ENCODE measurements at regions of chr7 and their contacts with region 1.

Region 1: DNA sequence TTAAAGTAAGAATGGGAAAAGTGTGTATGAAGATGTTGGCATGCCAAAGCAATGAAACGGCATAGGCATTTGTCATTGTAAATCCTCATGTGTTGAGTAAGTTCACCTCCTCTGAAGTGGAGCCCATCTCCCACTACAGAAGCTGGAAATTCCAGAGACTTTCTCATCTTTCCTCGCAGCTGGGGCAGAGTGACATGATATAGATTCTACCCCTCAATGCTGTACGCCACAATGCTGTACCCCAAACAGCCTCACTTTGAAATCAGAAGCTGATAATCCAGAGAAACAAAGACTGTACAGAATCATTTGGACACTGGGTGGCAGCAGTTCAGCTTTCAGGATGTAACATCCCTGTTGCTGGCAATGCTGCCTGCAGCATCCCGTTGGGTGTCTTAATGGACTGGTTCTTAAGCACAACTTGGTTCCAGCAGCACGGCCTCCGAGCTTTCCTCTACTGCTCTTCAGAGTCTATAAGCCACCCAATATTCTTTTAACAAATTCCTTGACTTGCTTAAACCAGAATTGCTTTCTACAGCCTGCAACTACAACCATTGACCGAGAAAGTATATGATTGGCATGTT is 18.8 kb downstream of the ZC3HAV1L start:
- DNase-seq: peak; percentile 56 to 71 (median 63)
- H3K4me3 ChIP-seq: no peak overlapping the region
- H3K4me3 Mint-ChIP-seq: no peak overlapping the region
- H3K27ac ChIP-seq: no peak overlapping the region
- H3K27ac Mint-ChIP-seq: no peak overlapping the region
- H3K4me1 ChIP-seq: no peaks in the 10 kb centered on the region
- H3K4me1 Mint-ChIP-seq: peaks cover 0 to 12% (median 5%) of the 10 kb centered on the region in 4 donors
- H3K27me3 ChIP-seq: no peaks in the 10 kb centered on the region
- H3K27me3 Mint-ChIP-seq: peaks cover 0 to 5% of the 10 kb centered on the region in 2 donors

Region 2: DNA sequence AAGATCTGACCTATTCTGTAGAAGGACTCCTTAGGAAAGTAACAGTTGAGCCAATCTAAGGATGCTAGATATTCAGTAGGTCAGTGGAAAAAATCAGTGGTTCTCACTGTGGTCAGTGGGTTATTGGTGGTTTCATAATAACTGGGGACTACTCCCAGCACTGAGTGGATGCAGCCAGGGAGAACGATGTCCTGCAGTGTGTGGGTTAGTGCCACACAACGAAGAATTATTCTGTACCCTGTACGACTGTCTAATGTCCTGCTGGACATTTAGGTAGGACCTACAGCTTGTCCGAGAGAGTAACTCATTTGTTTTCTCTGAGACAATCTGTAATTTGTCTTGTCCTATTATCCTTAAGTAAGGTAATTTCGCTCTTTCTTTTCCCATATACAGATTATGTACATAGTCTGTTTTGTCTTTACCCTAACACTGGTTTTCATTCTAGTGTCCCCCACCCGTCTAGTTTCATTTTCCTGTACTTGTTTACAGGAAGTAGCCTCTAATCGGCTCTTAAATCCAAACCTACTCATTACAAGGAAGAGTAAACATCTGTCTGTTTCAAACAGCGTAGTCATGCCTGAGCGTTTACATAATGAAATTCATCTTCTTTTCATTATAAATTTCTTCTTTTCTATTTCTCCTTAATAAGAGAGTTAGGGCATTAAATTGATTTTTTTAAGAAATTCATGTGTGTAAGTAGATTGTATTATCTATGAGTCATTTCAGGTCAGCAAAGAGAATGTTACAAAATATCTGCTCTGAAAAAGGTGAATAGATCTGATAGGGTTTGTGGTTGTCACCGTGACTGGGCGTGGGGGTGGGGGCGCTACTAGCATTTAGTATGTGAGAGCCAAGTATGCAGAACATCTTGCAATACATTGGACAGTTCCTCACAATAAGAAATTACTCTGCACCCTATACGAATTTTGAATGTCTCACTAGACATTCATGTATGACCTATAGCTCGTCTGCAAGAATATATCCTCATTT is 27.1 kb after region 1 on chr7:
- CTCF ChIA-PET with region 1: interaction called, 10 read pairs
- POLR2A ChIA-PET with region 1: interaction called, 4 read pairs
- intact Hi-C with region 1: loop called (anchors 1 kb)
- DNase-seq: peak; percentile 60 to 92 (median 68)
- H3K4me3 ChIP-seq: no peak overlapping the region
- H3K4me3 Mint-ChIP-seq: peak overlapping the region in 6 of 8 donors; percentile 51 to 77 (median 65)
- H3K27ac ChIP-seq: peak overlapping the region; percentile 15
- H3K27ac Mint-ChIP-seq: peak overlapping the region; percentile 57 to 93 (median 86)
- H3K4me1 ChIP-seq: peaks cover 61% of the 10 kb centered on the region
- H3K4me1 Mint-ChIP-seq: peaks cover 47 to 81% (median 61%) of the 10 kb centered on the region in 4 donors
- H3K27me3 ChIP-seq: no peaks in the 10 kb centered on the region
- H3K27me3 Mint-ChIP-seq: no peaks in the 10 kb centered on the region

Region 3: DNA sequence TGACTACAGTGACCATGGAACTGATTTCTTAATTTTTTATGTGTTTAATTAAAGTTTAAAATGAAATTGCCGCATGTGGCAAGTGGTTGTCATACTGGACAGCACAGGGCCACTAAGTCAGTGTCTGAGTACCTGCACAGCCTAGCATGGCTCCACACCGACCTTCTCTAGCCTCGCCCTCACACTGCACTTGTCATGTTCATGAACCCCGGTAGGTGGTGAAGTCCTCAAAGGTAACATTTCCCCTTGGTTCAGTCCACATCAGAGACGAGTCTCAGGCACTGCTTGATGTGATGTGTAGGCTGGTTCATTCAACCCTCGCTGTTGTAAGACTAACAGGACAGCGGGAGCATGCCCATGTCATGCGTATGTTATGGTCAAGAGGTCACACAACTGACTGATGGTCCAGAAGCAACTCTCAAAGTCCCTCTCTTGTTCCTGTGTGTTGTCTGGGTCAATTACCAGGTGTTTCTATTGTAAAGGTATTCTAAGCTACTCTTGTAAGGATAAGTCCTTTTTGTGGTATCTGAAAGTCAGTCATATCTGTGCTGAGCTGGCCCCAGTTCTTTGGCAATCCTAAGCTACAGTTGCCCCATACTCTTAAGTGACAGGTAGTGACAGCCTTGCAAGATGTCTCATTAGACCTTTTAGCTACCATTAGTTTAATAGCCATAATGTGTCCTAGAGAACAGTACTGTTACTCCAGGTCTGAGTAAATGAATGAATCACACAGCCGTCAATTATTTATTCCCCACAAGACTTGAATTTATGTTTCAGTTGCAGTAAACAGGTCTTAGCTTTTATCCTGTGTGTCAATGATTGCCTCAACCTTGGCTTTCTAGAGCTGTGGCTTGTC is 51.8 kb after region 1 on chr7:
- CTCF ChIA-PET with region 1: interaction called, 140 read pairs
- POLR2A ChIA-PET with region 1: interaction called, 11 read pairs
- intact Hi-C with region 1: no loop called
- DNase-seq: no peak
- H3K4me3 ChIP-seq: no peak overlapping the region
- H3K4me3 Mint-ChIP-seq: peak overlapping the region in 1 of 8 donors; percentile 40
- H3K27ac ChIP-seq: no peak overlapping the region
- H3K27ac Mint-ChIP-seq: peak overlapping the region; percentile 47 to 93 (median 68)
- H3K4me1 ChIP-seq: peaks cover 43% of the 10 kb centered on the region
- H3K4me1 Mint-ChIP-seq: peaks cover 33 to 83% (median 56%) of the 10 kb centered on the region in 4 donors
- H3K27me3 ChIP-seq: no peaks in the 10 kb centered on the region
- H3K27me3 Mint-ChIP-seq: no peaks in the 10 kb centered on the region

Region 4: DNA sequence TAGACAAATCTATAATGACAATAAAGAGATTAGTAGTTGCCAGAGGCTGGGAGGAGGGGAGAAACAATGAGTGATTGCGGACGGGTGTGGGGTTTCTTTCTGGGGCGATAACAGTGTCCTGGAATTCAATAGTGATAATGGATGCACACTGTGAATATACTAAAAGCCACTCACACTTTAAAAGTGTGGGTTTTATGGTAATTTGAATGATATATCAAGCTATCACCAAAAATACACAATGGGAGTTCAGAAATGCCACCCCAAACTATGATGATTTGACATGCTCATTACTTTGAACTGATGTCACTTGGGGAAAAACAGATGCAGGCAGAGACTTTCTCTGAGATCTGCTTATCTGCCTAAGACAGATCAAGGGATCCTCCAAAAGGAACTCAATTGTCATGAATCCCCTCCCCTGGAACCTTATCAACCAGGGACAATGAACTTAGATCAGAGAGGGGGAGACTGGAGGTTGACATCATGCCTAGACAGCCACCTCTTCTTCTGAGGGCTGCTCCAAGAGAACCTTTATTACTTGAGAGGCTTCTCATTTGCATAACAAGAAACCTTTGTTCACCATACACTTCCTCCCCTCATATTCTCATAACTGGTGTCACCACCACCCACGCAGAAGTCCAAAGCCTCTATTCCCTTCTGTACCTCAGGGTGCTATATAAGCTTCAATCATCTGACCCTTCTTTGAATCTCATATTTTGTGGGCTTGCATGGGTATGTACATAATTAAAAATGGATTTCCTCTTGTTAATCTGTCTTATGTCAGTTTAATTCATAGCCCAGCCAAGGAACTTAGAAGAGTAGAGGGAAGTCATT is 107.3 kb after region 1 on chr7:
- CTCF ChIA-PET with region 1: interaction called, 110 read pairs
- POLR2A ChIA-PET with region 1: interaction called, 11 read pairs
- intact Hi-C with region 1: loop called (anchors 1 kb)
- DNase-seq: no peak
- H3K4me3 ChIP-seq: no peak overlapping the region
- H3K4me3 Mint-ChIP-seq: peak overlapping the region in 1 of 8 donors; percentile 40
- H3K27ac ChIP-seq: no peak overlapping the region
- H3K27ac Mint-ChIP-seq: no peak overlapping the region
- H3K4me1 ChIP-seq: peaks cover 12% of the 10 kb centered on the region
- H3K4me1 Mint-ChIP-seq: peaks cover 7 to 31% (median 12%) of the 10 kb centered on the region in 4 donors
- H3K27me3 ChIP-seq: no peaks in the 10 kb centered on the region
- H3K27me3 Mint-ChIP-seq: no peaks in the 10 kb centered on the region

Region 5: GRCh38 chr7:139230774-139231512 is 213.9 kb after region 1 on chr7 and contains the start of gene UBN2:
- CTCF ChIA-PET with region 1: no interaction called
- POLR2A ChIA-PET with region 1: no interaction called
- intact Hi-C with region 1: loop called (anchors 1 kb)
- DNase-seq: peak; percentile 79 to 90 (median 80)
- H3K4me3 ChIP-seq: peak within 1 kb of the TSS; percentile 79 to 96
- H3K4me3 Mint-ChIP-seq: peak within 1 kb of the TSS; percentile 98 to 100 (median 100)
- H3K27ac ChIP-seq: peak within 1 kb of the TSS; percentile 74
- H3K27ac Mint-ChIP-seq: peak within 1 kb of the TSS; percentile 96 to 100 (median 98)
- H3K4me1 ChIP-seq: peaks cover 19% of the 10 kb centered on the region
- H3K4me1 Mint-ChIP-seq: peaks cover 10 to 36% (median 24%) of the 10 kb centered on the region in 4 donors
- H3K27me3 ChIP-seq: no peaks in the 10 kb centered on the region
- H3K27me3 Mint-ChIP-seq: no peaks in the 10 kb centered on the region
- total RNA-seq, gene UBN2: 23.6 to 26.7 TPM